Activated T-helper 1 cell treated with anti-CD3 and anti-CD28 coated beads, Interleukin-12 subunit alpha, Interleukin-12 subunit beta, Interleukin-2, Interleukin-4 antibody, amounts not matched to agents 30 ng/mL and 10 ng/mL and 1 ng/mL, durations not matched to agents 14 hours and 24 hours and 36 hours (primary cell): ENCODE measurements at regions of chr1 and their contacts with region 1.

Region 1: GRCh38 chr1:94805912-94806311 is 14.2 kb upstream of the SLC44A3 start:
- DNase-seq: peak; percentile 21
- H3K4me3 Mint-ChIP-seq: no peak overlapping the region
- H3K27ac Mint-ChIP-seq: no peak overlapping the region
- H3K4me1 Mint-ChIP-seq: peaks cover 6% of the 10 kb centered on the region
- H3K27me3 Mint-ChIP-seq: peaks cover 2% of the 10 kb centered on the region

Region 2: GRCh38 chr1:94039514-94039870 is 766.4 kb before region 1 on chr1:
- intact Hi-C with region 1: loop called (anchors 5 kb)
- DNase-seq: peak; percentile 24
- H3K4me3 Mint-ChIP-seq: no peak overlapping the region
- H3K27ac Mint-ChIP-seq: no peak overlapping the region
- H3K4me1 Mint-ChIP-seq: peaks cover 24% of the 10 kb centered on the region
- H3K27me3 Mint-ChIP-seq: peaks cover 12% of the 10 kb centered on the region

Region 3: GRCh38 chr1:94061513-94062443 is 744.1 kb before region 1 on chr1:
- intact Hi-C with region 1: loop called (anchors 5 kb)
- DNase-seq: peak; percentile 5
- H3K4me3 Mint-ChIP-seq: no peak overlapping the region
- H3K27ac Mint-ChIP-seq: no peak overlapping the region
- H3K4me1 Mint-ChIP-seq: no peaks in the 10 kb centered on the region
- H3K27me3 Mint-ChIP-seq: peaks cover 17% of the 10 kb centered on the region

Region 4: GRCh38 chr1:94481473-94481933 is 324.4 kb before region 1 on chr1:
- intact Hi-C with region 1: loop called (anchors 1 kb)
- DNase-seq: peak; percentile 11
- H3K4me3 Mint-ChIP-seq: no peak overlapping the region
- H3K27ac Mint-ChIP-seq: no peak overlapping the region
- H3K4me1 Mint-ChIP-seq: peaks cover under 1% of the 10 kb centered on the region
- H3K27me3 Mint-ChIP-seq: no peaks in the 10 kb centered on the region

Region 5: GRCh38 chr1:94514095-94514727 is 291.7 kb before region 1 on chr1:
- intact Hi-C with region 1: loop called (anchors 1 kb)
- DNase-seq: no peak
- H3K4me3 Mint-ChIP-seq: no peak overlapping the region
- H3K27ac Mint-ChIP-seq: no peak overlapping the region
- H3K4me1 Mint-ChIP-seq: no peaks in the 10 kb centered on the region
- H3K27me3 Mint-ChIP-seq: no peaks in the 10 kb centered on the region

Region 6: GRCh38 chr1:94522304-94522703 is 283.6 kb before region 1 on chr1:
- intact Hi-C with region 1: loop called (anchors 1 kb)
- DNase-seq: no peak
- H3K4me3 Mint-ChIP-seq: no peak overlapping the region
- H3K27ac Mint-ChIP-seq: no peak overlapping the region
- H3K4me1 Mint-ChIP-seq: no peaks in the 10 kb centered on the region
- H3K27me3 Mint-ChIP-seq: peaks cover 16% of the 10 kb centered on the region

Region 7: GRCh38 chr1:94819941-94820746 is 14.2 kb after region 1 on chr1 and contains the start of gene SLC44A3:
- intact Hi-C with region 1: no loop called
- DNase-seq: no peak
- H3K4me3 Mint-ChIP-seq: peak within 1 kb of the TSS; percentile 41
- H3K27ac Mint-ChIP-seq: no peak within 1 kb of the TSS
- H3K4me1 Mint-ChIP-seq: no peaks in the 10 kb centered on the region
- H3K27me3 Mint-ChIP-seq: peaks cover 55% of the 10 kb centered on the region
- total RNA-seq, gene SLC44A3: not detected in 2 replicates